Ascending aorta (tissue), 2 donors: ENCODE measurements at regions of chr2 and their contacts with region 1.

Region 1: GRCh38 chr2:46296840-46297545 is at the start of gene EPAS1:
- DNase-seq: peak; percentile 91 to 98
- H3K4me3 ChIP-seq: peak within 1 kb of the TSS; percentile 88 to 91
- H3K27ac ChIP-seq: peak within 1 kb of the TSS; percentile 96 to 97
- H3K4me1 ChIP-seq: peaks cover 6 to 18% of the 10 kb centered on the region in 2 donors
- H3K27me3 ChIP-seq: no peaks in the 10 kb centered on the region
- CTCF ChIP-seq: no peak
- total RNA-seq, gene EPAS1: 1,738 TPM

Region 2: DNA sequence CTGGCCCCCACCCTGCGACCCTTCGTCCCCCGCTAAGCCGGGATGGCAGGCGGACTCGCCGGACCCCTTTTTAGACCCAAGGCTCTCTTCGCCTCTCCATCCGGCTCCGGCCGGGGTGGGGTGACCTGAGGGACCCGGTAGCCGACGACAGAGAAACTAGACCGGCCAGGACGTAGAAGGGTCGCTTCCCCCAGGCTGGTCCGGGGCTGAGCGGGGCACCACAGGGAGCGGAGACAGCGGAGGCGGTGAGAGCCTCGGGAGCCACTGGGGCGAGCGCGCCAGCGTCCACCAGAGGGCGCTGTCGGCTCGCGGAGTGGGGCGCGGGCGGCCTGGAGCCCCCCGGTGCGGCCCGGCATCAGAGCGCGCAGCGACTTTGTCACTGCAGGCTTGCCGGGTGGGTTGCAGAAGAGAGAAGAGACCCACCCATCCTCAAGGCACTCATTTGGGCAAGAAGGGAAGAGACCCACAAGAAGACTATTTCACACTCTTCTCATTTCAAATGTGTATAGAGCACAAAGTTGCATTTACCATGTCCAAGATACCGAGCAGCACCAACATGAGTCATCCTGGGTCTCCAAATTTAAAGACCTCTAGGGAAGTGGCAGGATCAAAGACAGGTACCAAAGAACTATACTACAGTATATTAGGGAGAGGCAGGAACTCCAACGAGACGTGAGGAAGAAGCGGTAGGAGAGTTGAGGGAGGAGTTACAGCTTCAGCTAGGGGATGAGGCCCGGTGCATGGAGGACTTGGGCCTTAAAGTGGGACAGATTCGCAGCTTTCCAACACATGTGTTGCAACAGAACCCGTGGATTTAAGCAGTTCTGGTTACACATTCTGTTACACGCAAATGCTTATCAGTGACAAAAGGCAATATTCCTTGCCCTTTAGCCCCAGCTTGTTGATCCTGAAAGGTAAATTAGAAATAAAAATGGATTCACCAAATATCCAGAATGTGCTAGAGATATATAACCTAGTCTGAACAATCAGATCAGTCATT is 653.1 kb before region 1 on chr2:
- intact Hi-C with region 1: loop called (anchors 10 kb)
- DNase-seq: peak in 1 of 2 donors; percentile 76
- H3K4me3 ChIP-seq: peak overlapping the region; percentile 57 to 63
- H3K27ac ChIP-seq: no peak overlapping the region
- H3K4me1 ChIP-seq: peaks cover 0 to 3% of the 10 kb centered on the region in 2 donors
- H3K27me3 ChIP-seq: no peaks in the 10 kb centered on the region
- CTCF ChIP-seq: peak; percentile 94 to 100 (median 98)

Region 3: DNA sequence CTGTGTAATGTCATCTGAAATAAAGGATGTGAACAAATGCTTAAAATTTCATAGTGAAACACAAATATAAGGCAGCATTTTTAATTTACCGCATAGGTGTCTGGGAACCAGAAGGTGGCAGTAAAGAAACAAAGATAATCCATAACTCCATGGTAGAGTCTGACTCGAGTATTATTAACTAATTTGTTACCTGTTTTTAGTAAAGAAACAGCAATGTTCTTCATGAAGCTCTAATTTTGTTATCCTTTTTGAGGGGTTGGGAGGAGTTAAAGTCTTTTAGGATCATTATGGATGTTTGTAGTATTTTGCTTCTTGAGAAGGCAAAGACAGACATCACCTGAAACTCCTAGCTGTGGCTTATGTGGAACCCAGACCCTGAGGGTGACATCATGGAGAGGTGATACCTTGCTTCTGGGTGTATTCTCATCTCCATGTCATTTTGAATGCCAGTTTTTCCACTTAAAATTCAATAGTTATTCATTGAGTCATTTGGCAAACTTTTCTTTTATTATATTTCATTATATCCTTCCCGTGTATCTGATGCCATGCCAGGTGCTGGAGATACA is 286.0 kb before region 1 on chr2:
- intact Hi-C with region 1: loop called (anchors 5 kb)
- DNase-seq: no peak
- H3K4me3 ChIP-seq: no peak overlapping the region
- H3K27ac ChIP-seq: no peak overlapping the region
- H3K4me1 ChIP-seq: peaks cover 0 to 14% of the 10 kb centered on the region in 2 donors
- H3K27me3 ChIP-seq: no peaks in the 10 kb centered on the region
- CTCF ChIP-seq: peak; percentile 51 to 68 (median 65)

Region 4: GRCh38 chr2:46119453-46119852 is 177.5 kb before region 1 on chr2:
- intact Hi-C with region 1: loop called (anchors 1 kb)
- DNase-seq: no peak
- H3K4me3 ChIP-seq: no peak overlapping the region
- H3K27ac ChIP-seq: peak overlapping the region; percentile 57 to 64
- H3K4me1 ChIP-seq: peaks cover 0 to 35% of the 10 kb centered on the region in 2 donors
- H3K27me3 ChIP-seq: no peaks in the 10 kb centered on the region
- CTCF ChIP-seq: no peak

Region 5: GRCh38 chr2:46315103-46315890 is 18.3 kb after region 1 on chr2:
- intact Hi-C with region 1: loop called (anchors 1 kb)
- DNase-seq: peak; percentile 85 to 98
- H3K4me3 ChIP-seq: no peak overlapping the region
- H3K27ac ChIP-seq: peak overlapping the region; percentile 94 to 95
- H3K4me1 ChIP-seq: peaks cover 25 to 68% of the 10 kb centered on the region in 2 donors
- H3K27me3 ChIP-seq: no peaks in the 10 kb centered on the region
- CTCF ChIP-seq: no peak

Region 6: GRCh38 chr2:46364797-46365457 is 67.9 kb after region 1 on chr2:
- intact Hi-C with region 1: loop called (anchors 1 kb)
- DNase-seq: no peak
- H3K4me3 ChIP-seq: no peak overlapping the region
- H3K27ac ChIP-seq: no peak overlapping the region
- H3K4me1 ChIP-seq: peaks cover 0 to 8% of the 10 kb centered on the region in 2 donors
- H3K27me3 ChIP-seq: no peaks in the 10 kb centered on the region
- CTCF ChIP-seq: peak; percentile 68 to 86 (median 78)